AG04450 (cell line): ENCODE measurements at regions of chr1 and their contacts with region 1.

Region 1: GRCh38 chr1:6489799-6490180 is 1.7 kb downstream of the PLEKHG5 start:
- DNase-seq: peak; percentile 29
- H3K4me3 ChIP-seq: peak overlapping the region; percentile 91
- H3K27ac ChIP-seq: peak overlapping the region; percentile 82
- H3K27me3 ChIP-seq: no peaks in the 10 kb centered on the region
- CTCF ChIP-seq: peak; percentile 90

Region 2: GRCh38 chr1:6317098-6317760 is 172.6 kb before region 1 on chr1:
- CTCF ChIA-PET with region 1: no interaction called
- POLR2A ChIA-PET with region 1: no interaction called
- DNase-seq: no peak
- H3K4me3 ChIP-seq: no peak overlapping the region
- H3K27ac ChIP-seq: peak overlapping the region; percentile 31
- H3K27me3 ChIP-seq: no peaks in the 10 kb centered on the region
- CTCF ChIP-seq: no peak

Region 3: DNA sequence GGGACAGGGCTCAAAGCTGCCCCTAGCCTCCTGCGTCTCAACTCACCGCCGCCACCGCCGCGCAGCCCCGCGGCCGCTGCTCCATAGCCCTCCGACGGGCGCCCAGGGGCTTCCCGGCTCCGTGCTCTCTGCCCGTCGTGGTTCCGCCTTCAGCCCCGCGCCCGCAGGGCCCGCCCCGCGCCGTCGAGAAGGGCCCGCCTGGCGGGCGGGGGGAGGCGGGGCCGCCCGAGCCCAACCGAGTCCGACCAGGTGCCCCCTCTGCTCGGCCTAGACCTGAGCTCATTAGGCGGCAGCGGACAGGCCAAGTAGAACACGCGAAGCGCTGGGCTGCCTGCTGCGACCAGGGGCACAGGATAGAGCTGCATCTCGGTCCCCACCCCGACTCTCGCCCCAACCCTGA is 23.8 kb before region 1 on chr1 and contains the start of gene TNFRSF25:
- CTCF ChIA-PET with region 1: interaction called, 11 read pairs
- POLR2A ChIA-PET with region 1: interaction called, 4 read pairs
- DNase-seq: no peak
- H3K4me3 ChIP-seq: no peak within 1 kb of the TSS
- H3K27ac ChIP-seq: no peak within 1 kb of the TSS
- H3K27me3 ChIP-seq: peaks cover 4% of the 10 kb centered on the region
- CTCF ChIP-seq: no peak
- polyA plus RNA-seq, gene TNFRSF25: 2.7 and 3.3 TPM in 2 replicates

Region 4: DNA sequence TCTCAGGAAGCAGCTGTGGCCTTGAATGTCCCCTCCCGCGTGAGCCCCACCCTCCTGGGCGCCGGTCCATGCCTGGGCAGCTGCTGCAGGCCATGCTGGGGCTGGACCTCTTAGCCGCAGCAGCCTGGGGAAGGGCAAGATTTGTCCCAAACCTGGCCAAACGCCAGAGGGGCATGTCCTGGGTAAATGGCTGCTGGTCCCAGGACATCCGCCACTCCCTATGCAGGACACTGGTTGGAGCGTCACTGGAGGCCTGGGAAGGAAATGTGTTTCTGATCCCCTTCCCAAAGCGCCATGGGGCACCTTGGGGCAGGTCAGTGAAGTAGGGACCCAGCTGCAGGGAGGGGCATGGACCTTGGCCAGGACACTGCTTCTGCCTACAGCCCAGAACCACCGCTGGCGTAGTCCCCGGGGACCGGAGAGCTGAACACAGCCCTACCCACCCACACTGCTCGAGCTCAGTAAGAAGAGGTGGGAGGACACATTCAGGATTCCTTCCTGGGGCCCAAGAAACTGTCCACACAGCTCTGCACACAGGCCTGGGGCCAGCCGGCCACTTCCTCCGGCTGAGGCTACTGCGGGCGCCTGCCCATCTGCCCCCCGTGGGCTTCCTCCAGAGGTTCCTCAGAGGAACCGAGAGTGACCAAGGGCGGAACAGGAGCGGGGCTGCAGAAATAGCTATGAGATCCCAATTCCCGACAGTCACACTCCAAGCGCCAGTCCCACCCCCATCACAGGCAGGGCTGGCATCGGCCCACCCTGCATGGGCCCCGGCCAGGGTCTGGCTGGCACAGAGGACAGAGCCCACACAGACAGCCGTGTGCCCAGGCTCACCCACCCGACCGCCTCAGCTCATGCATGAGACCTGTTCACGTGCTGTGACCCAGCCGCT is 12.5 kb after region 1 on chr1:
- CTCF ChIA-PET with region 1: interaction called, 16 read pairs
- POLR2A ChIA-PET with region 1: no interaction called
- DNase-seq: no peak
- H3K4me3 ChIP-seq: no peak overlapping the region
- H3K27ac ChIP-seq: no peak overlapping the region
- H3K27me3 ChIP-seq: peaks cover 3% of the 10 kb centered on the region
- CTCF ChIP-seq: no peak

Region 5: GRCh38 chr1:6538956-6539355 is 49.2 kb after region 1 on chr1:
- CTCF ChIA-PET with region 1: interaction called, 12 read pairs
- POLR2A ChIA-PET with region 1: interaction called, 3 read pairs
- DNase-seq: no peak
- H3K4me3 ChIP-seq: no peak overlapping the region
- H3K27ac ChIP-seq: no peak overlapping the region
- H3K27me3 ChIP-seq: no peaks in the 10 kb centered on the region
- CTCF ChIP-seq: no peak

Region 6: DNA sequence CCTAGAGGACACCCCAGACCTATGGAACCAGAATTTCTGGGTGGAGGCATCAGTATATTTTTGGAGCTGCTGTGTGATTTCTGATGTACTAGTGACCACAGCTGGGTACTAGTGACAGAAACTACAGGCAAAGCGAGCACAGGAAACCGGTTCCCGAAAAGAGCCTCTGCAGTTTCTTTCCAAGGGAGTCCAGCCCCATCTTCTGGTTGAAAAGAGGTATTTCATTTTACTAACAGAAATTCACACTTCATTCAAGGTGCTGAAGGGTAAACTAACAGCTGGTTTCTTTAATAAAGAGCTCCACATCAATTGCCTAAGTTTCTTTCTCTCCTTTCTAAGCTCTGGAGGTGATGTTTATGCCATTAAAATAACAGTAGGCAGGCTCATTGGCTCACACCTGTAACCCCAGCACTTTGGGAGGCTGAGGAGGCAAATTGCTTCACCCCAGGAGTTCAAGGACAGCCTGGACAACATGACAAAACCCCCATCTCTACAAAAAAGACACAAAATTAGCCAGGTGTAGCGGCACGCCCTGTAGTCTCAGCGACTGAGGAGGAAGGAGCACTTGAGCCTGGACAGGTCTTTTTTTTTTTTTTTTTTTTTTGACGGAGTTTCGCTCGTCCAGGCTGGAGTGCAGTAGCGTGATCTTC is 156.8 kb after region 1 on chr1:
- CTCF ChIA-PET with region 1: interaction called, 25 read pairs
- POLR2A ChIA-PET with region 1: no interaction called
- DNase-seq: no peak
- H3K4me3 ChIP-seq: no peak overlapping the region
- H3K27ac ChIP-seq: no peak overlapping the region
- H3K27me3 ChIP-seq: no peaks in the 10 kb centered on the region
- CTCF ChIP-seq: peak; percentile 69